Activated CD4-positive, alpha-beta T cell treated with anti-CD3 and anti-CD28 coated beads for 36 hours (primary cell): ENCODE measurements at regions of chr19 and their contacts with region 1.

Region 1: GRCh38 chr19:1470203-1471009 is 8.6 kb downstream of the C19orf25 start:
- DNase-seq: peak; percentile 83
- ATAC-seq: peak; percentile 67
- H3K4me3 Mint-ChIP-seq: peak overlapping the region; percentile 54
- H3K27ac Mint-ChIP-seq: no peak overlapping the region
- H3K4me1 Mint-ChIP-seq: peaks cover 5% of the 10 kb centered on the region
- H3K27me3 Mint-ChIP-seq: peaks cover 3% of the 10 kb centered on the region

Region 2: GRCh38 chr19:1747285-1748114 is 277.1 kb after region 1 on chr19:
- CTCF ChIA-PET with region 1: no interaction called
- POLR2A ChIA-PET with region 1: no interaction called
- intact Hi-C with region 1: loop called in 1 of 2 experiments (anchors 2 kb)
- DNase-seq: peak; percentile 75
- ATAC-seq: peak; percentile 68
- H3K4me3 Mint-ChIP-seq: no peak overlapping the region
- H3K27ac Mint-ChIP-seq: no peak overlapping the region
- H3K4me1 Mint-ChIP-seq: peaks cover 11% of the 10 kb centered on the region
- H3K27me3 Mint-ChIP-seq: peaks cover 35% of the 10 kb centered on the region